ENCODE measurements at regions of chr9 and their contacts with region 1.

Region 1: GRCh38 chr9:116646661-116647512 is 40.2 kb upstream of the TRIM32 start:
- DNase-seq: no peak
- H3K4me3 ChIP-seq: no peak overlapping the region
- H3K27ac ChIP-seq: no peak overlapping the region
- H3K4me1 ChIP-seq: no peaks in the 10 kb centered on the region
- H3K27me3 ChIP-seq: no peaks in the 10 kb centered on the region
- CTCF ChIP-seq: peak in 2 of 3 experiments; percentile 38 to 39
- POLR2A ChIP-seq: no peak

Region 2: DNA sequence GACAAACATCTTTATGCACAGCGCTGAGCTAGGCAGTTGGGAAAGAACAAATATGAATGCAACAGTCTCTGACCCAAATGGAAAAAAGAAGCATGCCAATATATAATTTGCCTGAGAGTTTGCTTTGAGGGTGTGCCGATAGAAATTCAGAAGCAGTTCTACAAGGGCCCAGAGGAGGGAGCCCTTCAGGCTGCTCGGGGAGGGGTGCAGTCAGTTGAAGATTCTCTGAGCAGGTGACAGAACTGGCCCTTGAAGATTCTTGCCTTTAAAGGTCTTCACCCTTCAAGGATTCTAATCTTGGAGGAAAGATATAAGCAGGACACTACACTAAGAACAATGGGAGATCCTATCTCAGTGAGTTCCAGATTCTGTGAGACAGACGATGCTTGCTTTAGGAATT is 497.0 kb before region 1 on chr9:
- intact Hi-C with region 1: loop called (anchors 10 kb)
- DNase-seq: peak; percentile 49
- H3K4me3 ChIP-seq: no peak overlapping the region
- H3K27ac ChIP-seq: no peak overlapping the region
- H3K4me1 ChIP-seq: no peaks in the 10 kb centered on the region
- H3K27me3 ChIP-seq: no peaks in the 10 kb centered on the region
- CTCF ChIP-seq: peak; percentile 35 to 61 (median 59)
- POLR2A ChIP-seq: no peak

Region 3: DNA sequence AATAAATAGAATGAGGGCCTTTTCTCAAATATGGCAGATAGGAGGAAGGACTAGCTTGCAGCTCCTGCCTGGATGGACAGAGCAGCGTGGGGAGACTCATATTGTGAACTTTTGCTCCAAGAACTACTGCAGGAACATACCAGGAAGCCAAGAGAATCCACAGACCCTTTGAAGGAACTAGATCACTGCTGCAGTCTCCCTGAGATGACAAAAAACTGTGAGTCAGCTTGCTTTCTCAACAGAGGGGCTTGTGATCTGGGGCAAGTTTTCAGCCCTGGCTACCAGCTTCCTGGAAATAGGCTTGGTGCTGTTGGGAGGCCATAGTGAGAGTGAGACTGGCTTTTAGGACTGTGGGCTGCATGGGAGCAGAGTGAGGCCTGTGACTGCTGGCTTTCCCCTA is 130.4 kb before region 1 on chr9:
- intact Hi-C with region 1: no loop called
- DNase-seq: no peak
- H3K4me3 ChIP-seq: no peak overlapping the region
- H3K27ac ChIP-seq: no peak overlapping the region
- H3K4me1 ChIP-seq: no peaks in the 10 kb centered on the region
- H3K27me3 ChIP-seq: no peaks in the 10 kb centered on the region
- CTCF ChIP-seq: no peak
- POLR2A ChIP-seq: no peak

Region 4: DNA sequence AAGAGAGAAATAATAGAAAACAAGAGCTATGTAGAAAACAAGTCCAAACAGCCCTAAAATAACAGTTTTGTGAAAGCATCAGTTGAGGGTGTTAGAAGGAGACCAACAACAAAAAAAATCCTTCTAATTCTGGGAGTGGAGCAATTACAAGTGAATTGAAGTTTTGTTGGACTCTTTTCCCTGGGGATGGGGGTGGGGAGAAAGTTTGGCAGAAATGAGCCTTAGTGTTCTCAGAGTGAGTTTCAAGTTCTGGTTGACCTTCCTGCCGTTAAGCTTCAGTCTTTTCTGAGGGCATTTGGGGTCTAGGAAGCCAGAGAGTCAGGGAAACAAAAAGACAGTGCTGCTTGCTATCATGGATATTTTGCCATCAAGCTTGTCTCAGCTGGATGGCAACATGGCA is 66.0 kb before region 1 on chr9:
- intact Hi-C with region 1: no loop called
- DNase-seq: no peak
- H3K4me3 ChIP-seq: no peak overlapping the region
- H3K27ac ChIP-seq: no peak overlapping the region
- H3K4me1 ChIP-seq: no peaks in the 10 kb centered on the region
- H3K27me3 ChIP-seq: no peaks in the 10 kb centered on the region
- CTCF ChIP-seq: no peak
- POLR2A ChIP-seq: no peak

Measured in testis (tissue), 5 donors.